Caco-2 (cell line): ENCODE measurements at regions of chr11 and their contacts with region 1.

Region 1: DNA sequence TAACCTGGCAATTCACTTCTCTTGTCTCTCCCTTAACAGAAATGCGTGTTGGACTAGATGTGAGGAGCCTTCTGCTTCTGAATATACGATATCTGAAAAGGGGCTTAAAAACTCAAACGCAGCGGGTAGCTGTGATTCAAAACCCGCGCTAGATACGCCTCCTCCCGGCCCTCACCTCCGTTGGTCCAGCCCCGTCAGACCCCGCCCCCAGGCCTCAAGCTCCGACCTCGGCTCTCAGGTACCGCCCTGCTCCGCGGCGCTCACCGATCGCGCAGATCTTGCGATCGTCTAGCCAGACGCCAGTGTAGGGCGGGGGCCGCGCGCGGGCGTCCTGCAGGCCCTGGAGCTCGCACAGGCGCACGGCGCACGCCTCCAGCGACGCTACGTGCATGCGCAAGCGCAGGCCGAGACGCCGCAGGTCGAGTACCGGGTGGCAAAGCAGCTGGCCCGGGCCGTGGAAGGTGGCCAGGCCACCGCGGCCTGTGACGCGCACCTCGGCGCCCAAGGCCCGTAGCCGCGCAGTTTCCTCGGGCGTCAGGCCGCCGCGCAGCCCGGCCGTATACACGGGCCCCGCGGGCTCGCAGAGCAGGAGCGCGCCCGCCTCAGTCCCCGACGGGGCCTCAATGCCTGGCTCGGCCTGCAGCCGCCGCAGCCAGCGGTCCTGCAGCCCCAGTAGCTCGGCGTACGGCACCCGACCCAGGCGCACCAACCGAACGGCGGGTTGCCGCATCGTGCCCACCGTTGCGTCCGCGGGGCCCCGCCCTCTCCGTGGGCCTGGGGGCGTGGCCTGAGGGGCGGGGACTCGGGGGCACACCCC is at the start of gene LIPT2:
- DNase-seq: peak; percentile 100
- H3K4me3 ChIP-seq: peak within 1 kb of the TSS; percentile 88
- H3K4me3 Mint-ChIP-seq: peak within 1 kb of the TSS; percentile 76
- H3K27ac Mint-ChIP-seq: peak within 1 kb of the TSS; percentile 82
- H3K4me1 ChIP-seq: peaks cover 7% of the 10 kb centered on the region
- H3K4me1 Mint-ChIP-seq: peaks cover 10% of the 10 kb centered on the region
- H3K27me3 ChIP-seq: no peaks in the 10 kb centered on the region
- H3K27me3 Mint-ChIP-seq: no peaks in the 10 kb centered on the region
- CTCF ChIP-seq: no peak
- total RNA-seq, gene LIPT2: 10.5 and 14.4 TPM in 2 replicates

Region 2: GRCh38 chr11:74237541-74237940 is 255.6 kb before region 1 on chr11:
- CTCF ChIA-PET with region 1: no interaction called
- POLR2A ChIA-PET with region 1: no interaction called
- intact Hi-C with region 1: no loop called
- DNase-seq: no peak
- H3K4me3 ChIP-seq: no peak overlapping the region
- H3K4me3 Mint-ChIP-seq: no peak overlapping the region
- H3K27ac Mint-ChIP-seq: no peak overlapping the region
- H3K4me1 ChIP-seq: no peaks in the 10 kb centered on the region
- H3K4me1 Mint-ChIP-seq: no peaks in the 10 kb centered on the region
- H3K27me3 ChIP-seq: no peaks in the 10 kb centered on the region
- H3K27me3 Mint-ChIP-seq: no peaks in the 10 kb centered on the region
- CTCF ChIP-seq: no peak

Region 3: GRCh38 chr11:74398244-74399159 is 94.7 kb before region 1 on chr11 and contains the start of gene PGM2L1:
- CTCF ChIA-PET with region 1: interaction called, 5 read pairs
- POLR2A ChIA-PET with region 1: interaction called, 20 read pairs
- intact Hi-C with region 1: loop called (anchors 5 kb)
- DNase-seq: peak; percentile 97
- H3K4me3 ChIP-seq: peak within 1 kb of the TSS; percentile 81
- H3K4me3 Mint-ChIP-seq: peak within 1 kb of the TSS; percentile 100
- H3K27ac Mint-ChIP-seq: peak within 1 kb of the TSS; percentile 100
- H3K4me1 ChIP-seq: no peaks in the 10 kb centered on the region
- H3K4me1 Mint-ChIP-seq: peaks cover 13% of the 10 kb centered on the region
- H3K27me3 ChIP-seq: no peaks in the 10 kb centered on the region
- H3K27me3 Mint-ChIP-seq: no peaks in the 10 kb centered on the region
- CTCF ChIP-seq: no peak
- total RNA-seq, gene PGM2L1: 7.7 and 8.0 TPM in 2 replicates

Region 4: DNA sequence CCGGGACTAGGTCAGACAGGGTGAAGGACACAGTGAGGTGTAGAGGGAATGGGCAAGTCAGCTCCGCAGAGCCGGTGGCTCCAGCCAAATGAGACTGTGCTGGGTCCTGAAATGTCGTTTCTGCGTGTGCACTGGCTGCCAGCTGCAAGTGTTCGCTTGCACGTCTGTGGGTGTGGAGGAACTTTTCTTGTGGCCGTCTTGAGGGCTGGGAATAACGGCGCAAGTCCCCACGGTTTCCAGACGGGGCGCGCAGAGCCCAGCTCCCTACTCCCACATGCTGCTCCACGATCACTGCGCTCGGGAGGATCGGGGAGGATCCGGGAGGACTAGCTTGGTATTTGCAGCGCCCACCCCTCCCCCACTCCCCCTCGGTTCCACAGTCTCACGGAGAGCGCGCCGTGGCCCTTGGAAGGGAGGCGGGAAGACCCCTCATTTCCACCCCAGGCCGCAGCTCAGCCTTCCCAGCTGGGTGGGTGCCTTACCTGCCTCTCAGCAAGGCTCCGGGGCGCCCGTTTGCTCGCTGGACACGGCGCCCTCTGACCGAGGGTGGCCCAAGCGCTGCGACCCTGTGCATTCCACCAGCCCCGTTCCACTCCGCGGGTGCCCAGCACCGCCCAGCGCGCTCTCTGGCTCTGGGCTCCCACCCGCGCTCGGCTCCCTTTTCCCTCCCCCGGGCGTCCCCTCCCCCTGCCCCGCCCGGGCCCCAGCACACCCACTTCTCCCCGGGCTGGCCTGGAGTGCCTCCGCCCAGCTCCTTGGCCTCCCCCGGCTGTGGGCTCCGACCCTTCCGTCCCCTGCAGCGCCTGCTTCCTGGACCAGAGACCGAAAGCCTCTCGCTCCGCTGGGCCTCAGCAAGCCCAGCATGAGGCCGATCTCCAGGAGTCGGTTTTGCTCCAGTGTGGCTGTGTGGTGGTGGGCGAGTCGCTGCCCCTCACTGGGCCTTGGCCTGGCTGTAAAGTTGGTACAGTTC is 26.0 kb before region 1 on chr11 and contains the start of gene KCNE3:
- CTCF ChIA-PET with region 1: interaction called, 15 read pairs
- POLR2A ChIA-PET with region 1: interaction called, 23 read pairs
- intact Hi-C with region 1: loop called (anchors 1 kb)
- DNase-seq: peak; percentile 46 to 60
- H3K4me3 ChIP-seq: peak within 1 kb of the TSS; percentile 52
- H3K4me3 Mint-ChIP-seq: peak within 1 kb of the TSS; percentile 50
- H3K27ac Mint-ChIP-seq: peak within 1 kb of the TSS; percentile 91
- H3K4me1 ChIP-seq: peaks cover 54% of the 10 kb centered on the region
- H3K4me1 Mint-ChIP-seq: peaks cover 39% of the 10 kb centered on the region
- H3K27me3 ChIP-seq: no peaks in the 10 kb centered on the region
- H3K27me3 Mint-ChIP-seq: no peaks in the 10 kb centered on the region
- CTCF ChIP-seq: no peak
- total RNA-seq, gene KCNE3: 48.1 and 58.2 TPM in 2 replicates

Region 5: DNA sequence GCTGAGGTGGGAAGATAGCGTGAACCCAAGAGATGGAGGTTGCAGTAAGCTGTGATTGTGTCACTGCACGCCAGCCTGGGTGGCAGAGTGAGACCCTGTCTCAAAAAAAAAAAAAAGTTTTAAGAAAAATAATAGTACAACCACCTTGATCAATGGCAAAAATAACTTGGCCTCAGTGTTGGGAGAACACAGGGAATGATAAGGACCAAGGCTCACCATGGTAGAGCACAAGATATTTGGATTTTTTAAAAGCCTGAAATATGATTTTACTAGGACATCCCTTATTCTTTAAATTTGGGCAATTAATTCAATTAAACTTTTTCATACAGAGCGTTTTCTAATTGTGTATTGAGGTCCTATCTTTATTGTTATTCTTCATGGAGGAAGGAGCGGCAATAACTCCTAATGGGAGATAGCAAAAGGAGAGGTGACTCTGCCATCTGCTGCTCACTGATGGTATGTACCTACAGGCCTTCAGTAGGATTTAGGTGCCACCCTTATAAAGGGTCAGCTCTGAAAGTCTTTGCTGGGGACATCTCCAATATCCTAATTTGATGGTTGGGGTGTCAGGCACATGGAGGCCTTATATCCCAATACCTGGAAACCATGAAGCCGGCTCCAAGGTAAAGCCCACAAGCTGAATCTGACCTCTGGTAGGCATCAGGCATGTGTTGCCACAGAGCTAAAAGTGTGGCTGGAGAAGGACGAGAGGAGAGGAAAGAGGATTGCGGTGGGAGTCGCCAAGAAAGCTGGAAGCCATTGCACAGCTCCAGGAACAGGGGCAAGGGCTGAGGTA is 77.3 kb after region 1 on chr11:
- CTCF ChIA-PET with region 1: interaction called, 43 read pairs
- POLR2A ChIA-PET with region 1: interaction called, 5 read pairs
- intact Hi-C with region 1: loop called (anchors 1 kb)
- DNase-seq: peak; percentile 72 to 78
- H3K4me3 ChIP-seq: no peak overlapping the region
- H3K4me3 Mint-ChIP-seq: no peak overlapping the region
- H3K27ac Mint-ChIP-seq: no peak overlapping the region
- H3K4me1 ChIP-seq: peaks cover 12% of the 10 kb centered on the region; the same call in 1 of the 2 replicates
- H3K4me1 Mint-ChIP-seq: peaks cover 17% of the 10 kb centered on the region
- H3K27me3 ChIP-seq: no peaks in the 10 kb centered on the region
- H3K27me3 Mint-ChIP-seq: no peaks in the 10 kb centered on the region
- CTCF ChIP-seq: peak; percentile 89 to 95